Activated T-helper 1 cell treated with anti-CD3 and anti-CD28 coated beads, Interleukin-12 subunit alpha, Interleukin-12 subunit beta, Interleukin-2, Interleukin-4 antibody, amounts not matched to agents 30 ng/mL and 10 ng/mL and 1 ng/mL, durations not matched to agents 14 hours and 24 hours and 36 hours (primary cell): ENCODE measurements at regions of chr15 and their contacts with region 1.

Region 1: GRCh38 chr15:62066663-62067447 is at the start of gene C2CD4A:
- DNase-seq: peak; percentile 29
- H3K4me3 Mint-ChIP-seq: peak within 1 kb of the TSS; percentile 78
- H3K27ac Mint-ChIP-seq: peak within 1 kb of the TSS; percentile 47
- H3K4me1 Mint-ChIP-seq: peaks cover 26% of the 10 kb centered on the region
- H3K27me3 Mint-ChIP-seq: peaks cover 42% of the 10 kb centered on the region
- total RNA-seq, gene C2CD4A: 0.13 and 0.17 TPM in 2 replicates

Region 2: GRCh38 chr15:61841466-61841865 is 225.4 kb before region 1 on chr15:
- intact Hi-C with region 1: no loop called
- DNase-seq: no peak
- H3K4me3 Mint-ChIP-seq: no peak overlapping the region
- H3K27ac Mint-ChIP-seq: no peak overlapping the region
- H3K4me1 Mint-ChIP-seq: no peaks in the 10 kb centered on the region
- H3K27me3 Mint-ChIP-seq: peaks cover 16% of the 10 kb centered on the region

Region 3: GRCh38 chr15:61871926-61872522 is 194.8 kb before region 1 on chr15:
- intact Hi-C with region 1: loop called (anchors 1 kb)
- DNase-seq: no peak
- H3K4me3 Mint-ChIP-seq: no peak overlapping the region
- H3K27ac Mint-ChIP-seq: no peak overlapping the region
- H3K4me1 Mint-ChIP-seq: no peaks in the 10 kb centered on the region
- H3K27me3 Mint-ChIP-seq: no peaks in the 10 kb centered on the region

Region 4: GRCh38 chr15:62099094-62099601 is 32.3 kb after region 1 on chr15:
- intact Hi-C with region 1: no loop called
- DNase-seq: no peak
- H3K4me3 Mint-ChIP-seq: no peak overlapping the region
- H3K27ac Mint-ChIP-seq: no peak overlapping the region
- H3K4me1 Mint-ChIP-seq: no peaks in the 10 kb centered on the region
- H3K27me3 Mint-ChIP-seq: peaks cover 6% of the 10 kb centered on the region

Region 5: DNA sequence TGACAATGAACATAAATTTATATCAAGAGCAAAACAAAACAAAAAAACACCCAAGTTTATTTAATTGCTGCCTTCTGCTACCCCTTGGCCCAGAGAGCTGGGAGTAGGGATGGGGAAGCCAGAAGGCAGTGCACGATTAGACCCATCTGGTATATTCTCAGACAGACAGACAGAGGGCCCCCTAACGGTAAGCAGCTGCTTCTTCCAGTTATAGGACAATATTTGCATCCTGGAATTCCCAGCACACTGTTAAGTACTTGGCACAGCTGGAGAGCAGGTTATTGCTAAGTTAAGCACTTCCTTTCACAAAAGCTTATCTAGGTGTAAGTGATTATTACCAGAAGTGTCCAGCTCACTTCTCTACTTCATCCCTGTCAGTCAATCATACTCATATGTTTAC is 58.9 kb after region 1 on chr15:
- intact Hi-C with region 1: loop called (anchors 5 kb)
- DNase-seq: no peak
- H3K4me3 Mint-ChIP-seq: no peak overlapping the region
- H3K27ac Mint-ChIP-seq: peak overlapping the region; percentile 9
- H3K4me1 Mint-ChIP-seq: peaks cover 47% of the 10 kb centered on the region
- H3K27me3 Mint-ChIP-seq: peaks cover 14% of the 10 kb centered on the region

Region 6: GRCh38 chr15:62150445-62150844 is 83.6 kb after region 1 on chr15:
- intact Hi-C with region 1: loop called (anchors 5 kb)
- DNase-seq: no peak
- H3K4me3 Mint-ChIP-seq: no peak overlapping the region
- H3K27ac Mint-ChIP-seq: peak overlapping the region; percentile 33
- H3K4me1 Mint-ChIP-seq: peaks cover 24% of the 10 kb centered on the region
- H3K27me3 Mint-ChIP-seq: peaks cover 2% of the 10 kb centered on the region

Region 7: DNA sequence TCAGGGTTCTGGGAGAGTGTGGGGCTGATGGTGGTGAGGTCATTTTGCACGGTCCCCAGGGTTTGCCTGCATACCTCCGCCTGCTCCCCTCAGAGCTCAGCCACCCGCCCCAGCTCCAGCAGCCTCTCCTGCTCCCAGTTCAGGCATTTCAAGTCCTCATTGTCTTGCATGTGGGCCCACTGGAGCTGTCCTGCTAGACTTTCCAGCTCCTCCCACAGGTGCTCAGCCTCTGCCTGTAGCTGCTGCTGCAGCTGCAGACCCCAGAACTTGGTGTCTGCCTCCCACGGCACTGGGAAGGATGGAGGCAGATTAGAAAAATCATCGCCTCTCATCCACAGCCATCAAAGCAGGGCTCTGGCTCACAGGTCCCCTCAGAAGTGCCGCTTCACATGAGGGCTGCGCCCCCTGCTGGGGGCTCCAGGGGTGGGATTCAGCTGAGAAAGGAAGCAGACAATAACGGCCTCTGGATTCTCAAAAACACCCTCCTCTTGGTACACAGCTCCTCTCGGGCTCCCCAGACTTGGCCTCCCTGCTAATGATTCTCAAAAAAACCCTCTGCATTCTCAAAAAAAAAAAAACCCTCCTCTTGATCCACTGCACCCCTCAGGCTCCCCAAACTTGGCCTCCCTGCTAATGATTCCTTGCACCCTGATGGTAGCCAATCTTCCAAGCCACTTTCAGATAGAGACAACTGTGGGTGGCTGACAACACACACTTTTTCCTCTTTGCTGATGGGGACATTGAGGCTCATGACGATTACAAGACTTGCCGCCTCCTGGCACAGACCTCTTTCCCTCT is 187.5 kb after region 1 on chr15:
- intact Hi-C with region 1: loop called (anchors 1 kb)
- DNase-seq: peak; percentile 38
- H3K4me3 Mint-ChIP-seq: no peak overlapping the region
- H3K27ac Mint-ChIP-seq: no peak overlapping the region
- H3K4me1 Mint-ChIP-seq: no peaks in the 10 kb centered on the region
- H3K27me3 Mint-ChIP-seq: no peaks in the 10 kb centered on the region

Region 8: GRCh38 chr15:62306851-62307504 is 240.1 kb after region 1 on chr15:
- intact Hi-C with region 1: loop called (anchors 5 kb)
- DNase-seq: no peak
- H3K4me3 Mint-ChIP-seq: no peak overlapping the region
- H3K27ac Mint-ChIP-seq: no peak overlapping the region
- H3K4me1 Mint-ChIP-seq: peaks cover 7% of the 10 kb centered on the region
- H3K27me3 Mint-ChIP-seq: peaks cover 36% of the 10 kb centered on the region